Endothelial cell of umbilical vein (primary cell): ENCODE measurements at regions of chr16 and their contacts with region 1.

Region 1: GRCh38 chr16:67816240-67817031 is 9.7 kb downstream of the TSNAXIP1 start:
- DNase-seq: peak; percentile 70
- H3K4me3 ChIP-seq: no peak overlapping the region
- H3K27ac ChIP-seq: no peak overlapping the region
- H3K4me1 ChIP-seq: no peaks in the 10 kb centered on the region
- H3K27me3 ChIP-seq: no peaks in the 10 kb centered on the region
- CTCF ChIP-seq: peak; percentile 100
- POLR2A ChIP-seq: no peak

Region 2: DNA sequence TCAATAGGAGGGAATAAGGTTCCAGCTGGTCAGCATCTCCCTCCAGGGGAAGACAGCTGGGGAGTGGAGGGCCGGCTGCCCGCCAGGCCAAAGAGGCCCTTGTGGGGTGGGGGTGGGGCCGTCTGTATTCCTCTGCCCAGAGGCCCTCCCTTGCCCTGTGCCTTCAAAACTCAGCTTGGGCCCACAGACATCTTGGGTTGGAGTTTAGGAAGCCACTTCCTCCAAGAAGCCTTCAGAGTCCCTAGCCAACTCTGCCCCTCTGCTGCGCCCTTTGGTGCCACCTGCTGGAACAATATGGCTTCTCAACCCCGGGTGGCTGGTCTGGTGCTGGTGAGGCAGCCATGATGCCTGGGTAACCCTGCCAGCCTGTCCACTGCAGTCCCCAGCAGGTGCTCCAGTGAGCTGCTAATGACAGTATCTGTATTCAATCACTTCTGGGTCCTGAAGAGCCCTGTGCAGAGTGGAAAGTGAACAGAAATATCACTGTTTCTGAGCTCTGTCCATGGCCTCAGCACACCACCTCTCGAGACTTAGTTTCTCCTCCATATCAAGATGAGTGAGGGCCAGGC is 368.8 kb before region 1 on chr16:
- CTCF ChIA-PET with region 1: no interaction called
- POLR2A ChIA-PET with region 1: no interaction called
- dilution Hi-C with region 1: no loop called
- intact Hi-C with region 1: no loop called
- DNase-seq: peak; percentile 41
- H3K4me3 ChIP-seq: no peak overlapping the region
- H3K27ac ChIP-seq: no peak overlapping the region
- H3K4me1 ChIP-seq: no peaks in the 10 kb centered on the region
- H3K27me3 ChIP-seq: no peaks in the 10 kb centered on the region
- CTCF ChIP-seq: peak; percentile 63 to 66
- POLR2A ChIP-seq: no peak

Region 3: DNA sequence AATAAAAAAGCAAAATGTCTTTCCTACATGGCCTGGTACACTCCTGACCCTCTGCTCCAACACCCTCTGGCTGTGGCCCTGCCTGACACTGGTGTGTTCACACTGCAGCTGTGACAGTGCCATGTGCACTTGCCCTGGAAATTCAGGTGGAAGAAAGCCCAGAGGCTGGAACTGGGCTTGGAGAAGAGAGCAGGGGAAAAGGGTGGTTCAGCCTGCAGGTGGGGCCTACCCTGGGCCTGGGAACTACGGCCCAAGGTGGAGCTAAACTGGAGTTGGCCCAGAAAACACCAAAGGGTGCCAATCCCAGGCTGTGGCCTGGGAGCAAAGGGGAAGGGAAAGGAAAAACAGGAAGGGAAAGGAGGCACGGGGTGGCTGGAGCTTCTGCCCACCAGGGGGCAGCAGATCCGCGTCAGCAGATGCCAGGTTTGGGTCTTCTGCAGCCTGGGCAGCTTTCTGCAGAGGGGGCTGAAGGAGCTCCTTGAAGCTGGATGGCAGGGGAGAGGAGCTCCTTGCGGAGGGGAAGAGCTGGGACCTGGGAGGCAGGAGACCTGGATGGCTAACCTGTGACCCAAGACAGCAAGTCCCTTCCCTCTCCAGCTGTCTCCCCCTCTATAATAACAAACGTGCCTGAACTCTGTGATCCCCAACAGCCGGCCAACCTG is 269.5 kb before region 1 on chr16:
- CTCF ChIA-PET with region 1: no interaction called
- POLR2A ChIA-PET with region 1: no interaction called
- dilution Hi-C with region 1: no loop called
- intact Hi-C with region 1: no loop called
- DNase-seq: peak; percentile 89
- H3K4me3 ChIP-seq: no peak overlapping the region
- H3K27ac ChIP-seq: peak overlapping the region; percentile 83
- H3K4me1 ChIP-seq: peaks cover 23% of the 10 kb centered on the region
- H3K27me3 ChIP-seq: no peaks in the 10 kb centered on the region
- CTCF ChIP-seq: peak; percentile 93 to 97
- POLR2A ChIP-seq: peak; percentile 50

Region 4: DNA sequence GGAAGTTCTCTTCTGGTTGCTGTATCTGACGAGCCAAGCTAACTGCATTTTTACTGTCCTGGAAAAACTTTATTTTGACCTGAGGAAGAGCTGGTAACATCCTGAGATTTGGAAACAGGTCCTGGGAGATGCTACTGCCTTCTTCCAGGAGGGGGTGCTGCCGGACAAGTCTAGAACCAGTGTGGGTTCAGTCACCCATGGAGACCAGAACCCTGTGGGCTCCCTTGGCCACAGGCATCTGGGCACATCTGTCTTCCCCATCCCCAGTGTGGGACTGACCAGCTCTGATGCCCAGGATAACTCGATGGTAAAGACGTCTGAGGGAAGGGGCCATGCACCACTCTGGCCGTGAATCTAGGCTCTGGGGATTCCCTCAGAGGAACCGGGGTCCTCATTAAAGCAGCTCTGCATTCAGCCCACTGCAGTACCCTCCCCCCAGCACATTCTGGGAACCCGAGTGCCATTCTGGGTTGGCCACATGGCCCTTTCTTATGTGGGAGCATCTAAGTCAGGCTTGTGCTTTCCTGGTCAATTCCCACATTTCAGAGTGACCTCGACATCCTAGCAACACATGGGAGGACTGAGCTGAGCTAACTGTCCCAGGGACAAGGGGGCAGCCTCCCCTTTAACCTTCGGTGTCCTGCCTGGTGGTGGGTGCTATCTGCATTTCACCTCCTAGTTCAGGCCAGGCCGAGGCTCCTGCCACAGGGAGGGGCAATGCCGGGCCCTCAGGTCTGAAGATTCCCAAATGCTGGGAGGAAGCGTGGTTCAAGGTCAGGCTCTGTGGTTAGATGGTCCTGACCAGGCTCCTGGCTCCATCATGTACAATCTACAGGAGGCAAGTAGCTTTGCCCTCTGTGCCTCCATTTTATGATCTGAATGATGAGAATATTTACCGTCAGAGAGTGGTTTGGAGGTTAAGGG is 143.4 kb before region 1 on chr16:
- CTCF ChIA-PET with region 1: interaction called, 48 read pairs
- POLR2A ChIA-PET with region 1: no interaction called
- dilution Hi-C with region 1: no loop called
- intact Hi-C with region 1: loop called (anchors 1 kb)
- DNase-seq: peak; percentile 79
- H3K4me3 ChIP-seq: no peak overlapping the region
- H3K27ac ChIP-seq: peak overlapping the region; percentile 73
- H3K4me1 ChIP-seq: peaks cover 26% of the 10 kb centered on the region
- H3K27me3 ChIP-seq: no peaks in the 10 kb centered on the region
- CTCF ChIP-seq: peak; percentile 80 to 82
- POLR2A ChIP-seq: peak; percentile 22

Region 5: DNA sequence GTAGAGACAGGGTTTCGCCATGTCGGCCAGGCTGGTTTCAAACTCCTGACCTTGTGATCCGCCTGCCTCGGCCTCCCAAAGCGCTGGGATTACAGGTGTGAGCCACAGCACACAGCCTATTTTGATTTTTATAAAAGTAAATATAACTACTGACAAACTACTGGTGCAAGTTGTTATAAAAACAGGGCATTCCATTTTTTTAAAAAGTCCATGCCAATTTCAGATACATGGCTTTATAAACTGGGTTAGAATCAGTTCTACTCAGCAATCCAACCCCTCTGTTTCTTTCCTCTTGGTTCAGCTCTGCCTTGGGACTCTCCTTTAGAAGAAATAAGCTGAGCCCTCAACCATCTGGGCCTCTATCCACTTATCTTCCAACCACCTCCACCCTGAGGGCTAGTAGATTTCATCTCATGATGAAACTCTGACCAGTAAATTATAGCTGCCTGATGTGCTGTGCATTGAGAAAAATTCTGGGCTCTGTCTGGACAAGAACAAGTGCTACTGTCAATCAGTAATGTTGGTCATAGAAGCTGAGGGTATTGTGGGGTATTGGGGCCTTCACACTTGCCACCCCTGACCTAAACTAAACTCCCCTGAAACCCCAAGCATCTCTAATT is 20.2 kb before region 1 on chr16:
- CTCF ChIA-PET with region 1: interaction called, 11 read pairs
- POLR2A ChIA-PET with region 1: no interaction called
- dilution Hi-C with region 1: no loop called
- intact Hi-C with region 1: no loop called
- DNase-seq: no peak
- H3K4me3 ChIP-seq: no peak overlapping the region
- H3K27ac ChIP-seq: no peak overlapping the region
- H3K4me1 ChIP-seq: no peaks in the 10 kb centered on the region
- H3K27me3 ChIP-seq: no peaks in the 10 kb centered on the region
- CTCF ChIP-seq: no peak
- POLR2A ChIP-seq: no peak

Region 6: DNA sequence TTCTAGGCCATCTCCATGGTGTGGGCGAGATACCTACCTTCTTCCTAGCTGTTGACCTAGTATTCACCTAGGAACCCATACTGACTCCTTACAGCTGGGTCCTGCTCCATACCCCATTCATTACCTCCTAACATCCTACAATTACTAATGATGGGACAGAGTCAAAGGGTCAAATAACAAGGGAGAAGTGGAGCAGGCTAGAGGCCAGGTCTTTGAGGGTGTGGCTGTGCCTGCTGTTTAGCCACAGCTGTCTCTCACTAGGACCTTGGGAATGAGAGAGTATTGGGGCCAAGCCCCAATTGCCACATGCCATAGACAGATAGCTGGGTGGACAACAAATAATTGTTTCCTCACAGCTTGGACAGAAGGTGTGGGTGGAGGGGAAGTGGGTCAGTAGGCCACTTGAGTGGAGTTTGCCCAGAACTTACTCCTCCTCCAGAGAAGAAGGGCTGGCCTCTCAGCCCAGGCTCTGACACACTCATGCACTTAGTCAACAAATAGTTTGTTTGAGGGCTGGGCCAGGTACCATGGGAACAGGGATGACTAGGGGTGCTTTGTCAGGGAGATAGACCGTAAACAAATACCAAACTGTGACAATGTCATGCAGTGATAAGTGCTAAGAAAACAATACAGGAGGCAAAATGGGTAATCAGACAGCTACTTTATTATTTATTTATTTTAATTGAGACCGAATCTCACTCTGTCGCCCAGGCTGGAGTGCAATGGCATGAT is 41.2 kb after region 1 on chr16:
- CTCF ChIA-PET with region 1: interaction called, 64 read pairs
- POLR2A ChIA-PET with region 1: no interaction called
- dilution Hi-C with region 1: no loop called
- intact Hi-C with region 1: no loop called
- DNase-seq: peak; percentile 89
- H3K4me3 ChIP-seq: no peak overlapping the region
- H3K27ac ChIP-seq: peak overlapping the region; percentile 77
- H3K4me1 ChIP-seq: peaks cover 9% of the 10 kb centered on the region
- H3K27me3 ChIP-seq: no peaks in the 10 kb centered on the region
- CTCF ChIP-seq: no peak
- POLR2A ChIP-seq: no peak

Region 7: GRCh38 chr16:67883872-67884261 is 67.4 kb after region 1 on chr16:
- CTCF ChIA-PET with region 1: interaction called, 13 read pairs
- POLR2A ChIA-PET with region 1: no interaction called
- dilution Hi-C with region 1: no loop called
- intact Hi-C with region 1: no loop called
- DNase-seq: peak; percentile 48
- H3K4me3 ChIP-seq: no peak overlapping the region
- H3K27ac ChIP-seq: no peak overlapping the region
- H3K4me1 ChIP-seq: no peaks in the 10 kb centered on the region
- H3K27me3 ChIP-seq: no peaks in the 10 kb centered on the region
- CTCF ChIP-seq: peak; percentile 81 to 94
- POLR2A ChIP-seq: no peak

Region 8: DNA sequence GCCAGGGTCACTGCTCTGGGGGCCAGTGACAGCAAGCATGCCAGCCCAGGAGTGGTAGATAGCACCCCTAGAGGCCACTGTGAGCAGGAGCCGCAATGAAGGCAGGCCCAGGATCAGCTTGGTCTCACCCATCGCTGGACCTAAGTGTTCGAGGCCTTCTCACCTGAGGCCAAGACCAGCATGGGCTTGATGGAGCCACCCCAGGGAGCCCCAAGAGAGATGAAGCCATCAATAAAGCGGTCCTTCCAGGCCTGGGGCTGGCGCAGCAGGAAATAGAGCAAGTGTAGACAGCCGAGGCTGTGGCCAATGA is 125.7 kb after region 1 on chr16:
- CTCF ChIA-PET with region 1: interaction called, 27 read pairs
- POLR2A ChIA-PET with region 1: no interaction called
- dilution Hi-C with region 1: no loop called
- intact Hi-C with region 1: no loop called
- DNase-seq: peak; percentile 35
- H3K4me3 ChIP-seq: no peak overlapping the region
- H3K27ac ChIP-seq: no peak overlapping the region
- H3K4me1 ChIP-seq: peaks cover 1% of the 10 kb centered on the region
- H3K27me3 ChIP-seq: no peaks in the 10 kb centered on the region
- CTCF ChIP-seq: peak; percentile 66 to 82
- POLR2A ChIP-seq: no peak

Region 9: GRCh38 chr16:68229431-68230198 is 413.2 kb after region 1 on chr16:
- CTCF ChIA-PET with region 1: interaction called, 13 read pairs
- POLR2A ChIA-PET with region 1: no interaction called
- dilution Hi-C with region 1: no loop called
- intact Hi-C with region 1: no loop called
- DNase-seq: peak; percentile 66
- H3K4me3 ChIP-seq: no peak overlapping the region
- H3K27ac ChIP-seq: no peak overlapping the region
- H3K4me1 ChIP-seq: no peaks in the 10 kb centered on the region
- H3K27me3 ChIP-seq: no peaks in the 10 kb centered on the region
- CTCF ChIP-seq: peak; percentile 83
- POLR2A ChIP-seq: no peak